ENCODE measurements at regions of chr2 and their contacts with region 1.

Region 1: DNA sequence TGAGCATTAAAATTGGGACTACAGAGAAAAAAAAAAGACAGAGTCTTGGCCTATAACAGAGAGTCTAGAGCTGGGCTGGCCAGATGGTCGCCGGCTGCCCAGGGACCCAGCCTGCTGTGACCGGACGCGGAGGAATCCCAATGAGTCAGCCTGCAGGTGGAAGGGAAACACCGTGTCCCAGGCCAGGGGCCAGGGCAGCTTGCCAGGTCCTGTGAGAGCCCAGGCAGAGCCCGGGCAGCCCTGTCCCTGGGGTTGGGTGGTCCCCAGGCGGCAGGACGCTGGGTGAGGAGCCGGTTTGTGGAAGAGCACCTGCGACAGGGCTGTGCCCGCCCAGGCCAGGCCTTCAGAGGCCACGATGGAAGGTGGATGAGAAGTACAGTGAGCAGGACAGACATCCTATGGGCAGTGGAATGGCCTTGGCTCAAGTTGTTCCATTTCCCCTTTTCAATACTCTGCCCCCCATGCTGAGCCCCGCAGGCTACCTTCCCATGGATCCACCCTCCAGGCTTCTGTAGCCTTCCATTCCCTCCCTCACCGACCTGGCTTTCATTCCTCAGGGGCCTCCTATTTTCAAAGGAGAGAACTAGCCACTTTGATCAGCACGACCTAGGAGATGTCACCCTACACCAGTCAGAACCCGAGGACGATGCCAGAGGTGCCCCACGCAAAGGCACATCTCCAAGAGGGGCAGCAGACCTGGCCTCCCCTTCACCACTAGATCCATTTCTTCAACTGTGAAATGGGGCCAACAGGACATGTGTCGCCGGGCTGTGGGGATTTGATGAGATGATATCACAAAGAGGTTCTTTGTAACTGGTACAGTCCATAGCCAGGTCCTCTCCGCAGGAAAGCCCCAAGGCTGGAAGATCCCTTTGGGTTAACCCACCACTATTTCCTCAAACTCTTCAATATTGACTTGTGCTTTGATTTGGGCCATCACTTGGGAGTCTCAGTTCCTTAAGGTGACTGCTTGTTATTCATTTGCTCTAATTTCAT is 87.5 kb downstream of the POLR1A start:
- DNase-seq: no peak
- ATAC-seq: no peak
- H3K4me3 Mint-ChIP-seq: no peak overlapping the region
- H3K27ac Mint-ChIP-seq: peak overlapping the region; percentile 85
- H3K4me1 Mint-ChIP-seq: peaks cover 67% of the 10 kb centered on the region
- H3K27me3 Mint-ChIP-seq: no peaks in the 10 kb centered on the region
- CTCF ChIP-seq: no peak

Region 2: GRCh38 chr2:85926931-85927661 is 91.1 kb before region 1 on chr2:
- CTCF ChIA-PET with region 1: no interaction called
- POLR2A ChIA-PET with region 1: no interaction called
- intact Hi-C with region 1: loop called (anchors 5 kb)
- DNase-seq: no peak
- ATAC-seq: no peak
- H3K4me3 Mint-ChIP-seq: no peak overlapping the region
- H3K27ac Mint-ChIP-seq: no peak overlapping the region
- H3K4me1 Mint-ChIP-seq: peaks cover 8% of the 10 kb centered on the region
- H3K27me3 Mint-ChIP-seq: no peaks in the 10 kb centered on the region
- CTCF ChIP-seq: no peak

Region 3: GRCh38 chr2:86518481-86518880 is 500.3 kb after region 1 on chr2:
- CTCF ChIA-PET with region 1: no interaction called
- POLR2A ChIA-PET with region 1: no interaction called
- intact Hi-C with region 1: no loop called
- DNase-seq: no peak
- ATAC-seq: no peak
- H3K4me3 Mint-ChIP-seq: no peak overlapping the region
- H3K27ac Mint-ChIP-seq: no peak overlapping the region
- H3K4me1 Mint-ChIP-seq: no peaks in the 10 kb centered on the region
- H3K27me3 Mint-ChIP-seq: no peaks in the 10 kb centered on the region
- CTCF ChIP-seq: no peak